ENCODE measurements at regions of chr12 and their contacts with region 1.

Region 1: GRCh38 chr12:49707128-49707811 is at the start of gene FMNL3:
- DNase-seq: peak; percentile 98
- ATAC-seq: peak; percentile 97
- total RNA-seq, gene FMNL3: 12.2 to 21.2 TPM

Region 2: GRCh38 chr12:49644620-49644994 is 62.7 kb before region 1 on chr12:
- intact Hi-C with region 1: loop called (anchors 1 to 2 kb)
- DNase-seq: peak; percentile 84
- ATAC-seq: peak; percentile 71 to 85

Region 3: DNA sequence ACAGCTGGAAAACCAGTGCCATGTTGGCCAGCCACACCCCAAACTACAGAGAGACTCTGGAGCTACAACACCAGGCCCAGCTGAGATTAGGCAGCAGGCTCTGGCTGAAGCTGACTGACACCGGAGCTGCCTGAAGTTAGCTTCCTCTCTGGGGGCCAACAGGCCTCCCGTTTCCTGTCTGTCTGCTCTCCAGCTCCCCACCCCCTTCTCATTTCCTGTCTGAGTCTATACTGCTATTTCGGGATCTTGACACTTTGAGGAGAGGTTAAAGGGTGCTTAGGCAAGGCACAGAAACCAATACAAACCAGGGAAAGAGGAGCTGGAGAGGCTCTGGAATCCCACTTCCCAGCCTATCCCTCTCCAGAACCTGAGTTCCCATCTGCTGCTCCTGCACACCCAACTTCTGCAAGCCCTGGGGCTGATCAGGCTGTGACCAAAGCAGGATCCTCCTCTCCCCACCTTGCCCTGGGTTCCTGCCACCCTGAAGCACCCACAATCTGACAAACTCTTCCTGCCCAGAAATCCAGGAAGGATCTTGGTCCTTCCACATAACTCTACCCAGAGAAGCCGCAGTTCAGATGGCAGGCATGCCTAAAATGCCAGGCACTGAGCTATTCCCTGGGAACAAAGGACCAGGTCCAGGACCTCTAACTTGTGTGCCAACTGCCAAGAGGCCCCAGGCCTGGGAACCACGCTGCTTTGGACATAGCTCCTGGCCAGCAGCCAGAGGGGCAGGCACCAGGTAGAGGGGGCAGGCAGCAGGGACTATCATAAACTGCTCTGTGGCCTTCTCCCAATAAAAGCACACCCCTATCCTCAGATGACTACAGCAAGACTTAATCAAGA is 44.0 kb before region 1 on chr12:
- intact Hi-C with region 1: loop called in 1 of 2 experiments (anchors 5 kb)
- DNase-seq: peak; percentile 84
- ATAC-seq: peak; percentile 89 to 91

Region 4: DNA sequence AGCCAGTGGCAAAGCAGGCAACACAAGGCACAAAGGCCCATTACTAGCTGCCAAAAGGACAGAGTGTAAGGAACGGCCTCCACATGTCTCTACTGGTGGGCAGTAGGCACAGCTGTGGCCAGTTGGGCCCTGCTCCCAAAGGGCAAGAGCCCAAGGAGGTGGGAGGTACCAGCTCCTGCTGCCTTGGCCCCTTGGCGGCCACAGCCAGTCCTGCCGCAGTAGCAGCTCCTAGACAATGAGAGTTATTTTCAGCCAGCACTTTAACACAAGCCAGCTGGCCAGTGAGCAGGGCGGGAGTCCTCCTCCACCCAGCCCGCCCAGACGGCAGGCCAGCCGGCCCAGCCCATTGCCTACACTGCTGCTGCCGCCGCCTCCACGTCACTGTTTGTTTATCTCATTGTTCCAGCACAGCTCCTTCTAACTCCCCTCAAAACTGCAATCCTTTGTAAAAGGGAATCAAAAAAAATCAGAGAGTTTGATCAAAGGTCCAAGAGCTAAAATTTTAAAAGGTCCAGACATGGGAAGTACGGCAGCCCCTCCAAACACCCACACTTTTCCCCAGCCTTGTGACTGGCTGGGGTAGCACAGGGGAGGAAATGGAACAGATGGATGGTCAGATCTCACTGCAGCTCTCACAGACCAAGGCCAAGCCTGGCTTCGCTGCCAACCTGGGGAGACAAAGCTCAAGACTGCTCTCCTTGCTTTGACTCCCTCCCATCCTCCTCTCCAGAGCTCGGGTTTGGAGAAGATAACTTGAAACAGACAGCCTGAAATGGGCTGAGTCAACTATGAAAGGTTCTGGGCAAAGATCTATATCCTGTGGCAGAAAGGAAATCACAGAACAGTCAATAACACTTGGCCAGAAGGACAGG is 33.6 kb before region 1 on chr12:
- intact Hi-C with region 1: loop called in 1 of 2 experiments (anchors 2 kb)
- DNase-seq: peak; percentile 93
- ATAC-seq: peak; percentile 97